ENCODE measurements at regions of chr13 and their contacts with region 1.

Region 1: DNA sequence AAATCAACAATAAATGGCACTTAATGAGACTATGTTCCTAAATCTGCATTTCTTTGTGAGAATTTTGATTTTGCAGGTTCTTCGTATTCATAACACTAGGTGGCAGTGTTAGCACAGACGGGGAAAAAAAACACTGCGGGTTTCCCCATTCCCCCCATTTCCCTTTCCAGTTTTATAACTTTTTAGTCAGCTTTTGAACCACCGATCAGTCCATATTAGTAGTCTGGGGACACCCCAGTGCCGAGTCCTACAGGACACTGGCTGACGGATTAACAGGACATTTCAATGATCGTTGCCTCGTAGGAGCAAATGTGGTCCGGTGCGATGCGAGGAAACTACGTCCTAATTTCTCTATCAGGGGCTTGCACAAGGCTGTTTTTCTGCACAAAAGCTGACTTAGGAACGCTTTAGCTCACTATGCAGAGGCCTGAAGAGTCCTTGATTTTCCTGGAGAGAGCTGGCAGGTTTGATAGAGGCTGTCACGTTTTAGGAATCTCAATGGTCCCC is 234.3 kb downstream of the LMO7 start:
- DNase-seq: peak; percentile 17
- H3K4me3 Mint-ChIP-seq: peak overlapping the region; percentile 52
- H3K27ac Mint-ChIP-seq: peak overlapping the region; percentile 71
- H3K4me1 Mint-ChIP-seq: peaks cover 22% of the 10 kb centered on the region
- H3K27me3 Mint-ChIP-seq: peaks cover 9% of the 10 kb centered on the region

Region 2: DNA sequence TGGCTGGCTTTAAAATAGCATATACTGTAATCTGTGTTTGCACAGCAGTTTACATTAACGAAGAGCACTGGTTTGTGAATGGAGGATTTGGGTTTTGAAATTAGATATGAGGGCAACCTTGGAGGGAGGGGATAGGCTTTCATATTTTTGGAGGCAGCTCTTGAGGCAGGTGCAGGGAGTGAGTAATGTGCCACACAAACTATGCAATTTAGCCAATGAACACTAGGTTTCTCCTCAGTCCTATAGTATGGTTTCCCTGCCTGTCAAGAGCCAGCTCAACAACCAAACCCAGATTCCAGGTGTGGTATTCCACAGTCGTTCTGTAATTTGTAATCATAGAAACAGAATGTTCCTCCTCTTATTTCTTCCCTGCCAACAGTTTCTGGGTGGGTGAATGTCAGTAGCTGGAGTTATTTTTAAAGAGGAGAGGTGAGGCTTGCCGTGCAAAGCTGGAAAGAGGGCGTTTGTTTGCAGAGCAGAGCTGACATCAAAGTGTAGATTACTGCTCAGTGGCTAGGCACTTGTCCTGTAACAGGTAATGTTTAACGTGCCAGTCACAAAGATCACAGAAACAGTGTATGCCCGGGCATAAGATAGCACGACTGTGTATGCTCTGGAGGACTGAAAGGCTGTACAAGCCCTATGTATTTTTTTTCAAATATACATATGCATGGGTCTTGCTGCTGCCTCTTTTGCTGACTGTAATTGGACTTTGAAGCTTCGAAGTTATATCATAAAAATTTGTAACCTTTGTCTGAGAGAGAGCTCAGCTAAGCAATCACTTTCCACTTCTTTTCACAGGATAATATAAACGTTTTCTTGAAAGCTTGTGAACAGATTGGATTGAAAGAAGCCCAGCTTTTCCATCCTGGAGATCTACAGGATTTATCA is 110.1 kb before region 1 on chr13:
- CTCF ChIA-PET with region 1: interaction called, 21 read pairs
- POLR2A ChIA-PET with region 1: no interaction called
- DNase-seq: no peak
- H3K4me3 Mint-ChIP-seq: no peak overlapping the region
- H3K27ac Mint-ChIP-seq: no peak overlapping the region
- H3K4me1 Mint-ChIP-seq: peaks cover 41% of the 10 kb centered on the region
- H3K27me3 Mint-ChIP-seq: no peaks in the 10 kb centered on the region

Region 3: GRCh38 chr13:76038920-76039716 is 168.7 kb after region 1 on chr13:
- CTCF ChIA-PET with region 1: no interaction called
- POLR2A ChIA-PET with region 1: no interaction called
- DNase-seq: no peak
- H3K4me3 Mint-ChIP-seq: no peak overlapping the region
- H3K27ac Mint-ChIP-seq: no peak overlapping the region
- H3K4me1 Mint-ChIP-seq: no peaks in the 10 kb centered on the region
- H3K27me3 Mint-ChIP-seq: no peaks in the 10 kb centered on the region

Region 4: GRCh38 chr13:76473552-76474134 is 603.2 kb after region 1 on chr13:
- CTCF ChIA-PET with region 1: interaction called, 36 read pairs
- POLR2A ChIA-PET with region 1: no interaction called
- DNase-seq: peak; percentile 70
- H3K4me3 Mint-ChIP-seq: no peak overlapping the region
- H3K27ac Mint-ChIP-seq: no peak overlapping the region
- H3K4me1 Mint-ChIP-seq: no peaks in the 10 kb centered on the region
- H3K27me3 Mint-ChIP-seq: peaks cover 3% of the 10 kb centered on the region